ENCODE measurements at regions of chr16 and their contacts with region 1.

Region 1: DNA sequence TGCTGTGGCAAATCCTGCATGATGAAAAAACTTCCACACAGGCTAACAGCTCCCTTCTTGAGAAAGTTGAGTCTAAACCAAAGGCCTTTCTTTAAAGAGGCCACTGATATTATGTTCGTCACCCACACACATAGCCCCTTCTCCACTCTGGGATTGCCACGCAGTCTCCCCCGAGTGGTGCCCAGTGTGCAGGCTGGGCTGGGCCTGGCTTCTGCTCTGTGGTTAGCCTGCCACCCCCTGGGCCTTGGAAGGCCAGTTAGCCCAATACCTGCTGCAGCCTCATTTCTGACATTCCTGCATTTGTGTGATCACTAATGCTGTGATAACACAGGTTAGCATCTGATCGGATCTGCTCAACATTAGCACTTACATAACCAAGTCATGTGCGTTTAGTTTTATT is 44.8 kb downstream of the CDH3 start:
- DNase-seq: no peak
- ATAC-seq: peak; percentile 34; the same call in 1 of the 2 replicates
- H3K4me3 ChIP-seq: no peak overlapping the region
- H3K27ac ChIP-seq: no peak overlapping the region
- H3K4me1 ChIP-seq: no peaks in the 10 kb centered on the region
- H3K27me3 ChIP-seq: no peaks in the 10 kb centered on the region
- CTCF ChIP-seq: no peak

Region 2: DNA sequence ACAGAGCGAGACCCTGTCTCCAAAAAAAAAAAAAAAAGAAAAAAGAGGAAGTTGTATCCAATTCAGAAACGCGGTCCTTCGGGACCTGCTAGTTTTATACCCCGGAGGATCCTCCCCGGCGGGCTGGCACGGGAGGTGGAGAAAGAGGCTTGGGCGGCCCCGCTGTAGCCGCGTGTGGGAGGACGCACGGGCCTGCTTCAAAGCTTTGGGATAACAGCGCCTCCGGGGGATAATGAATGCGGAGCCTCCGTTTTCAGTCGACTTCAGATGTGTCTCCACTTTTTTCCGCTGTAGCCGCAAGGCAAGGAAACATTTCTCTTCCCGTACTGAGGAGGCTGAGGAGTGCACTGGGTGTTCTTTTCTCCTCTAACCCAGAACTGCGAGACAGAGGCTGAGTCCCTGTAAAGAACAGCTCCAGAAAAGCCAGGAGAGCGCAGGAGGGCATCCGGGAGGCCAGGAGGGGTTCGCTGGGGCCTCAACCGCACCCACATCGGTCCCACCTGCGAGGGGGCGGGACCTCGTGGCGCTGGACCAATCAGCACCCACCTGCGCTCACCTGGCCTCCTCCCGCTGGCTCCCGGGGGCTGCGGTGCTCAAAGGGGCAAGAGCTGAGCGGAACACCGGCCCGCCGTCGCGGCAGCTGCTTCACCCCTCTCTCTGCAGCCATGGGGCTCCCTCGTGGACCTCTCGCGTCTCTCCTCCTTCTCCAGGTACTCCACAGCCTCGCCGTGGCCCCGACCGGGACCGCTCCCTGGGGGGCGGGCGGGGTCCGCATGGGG is 45.0 kb before region 1 on chr16 and contains the start of gene CDH3:
- CTCF ChIA-PET with region 1: no interaction called
- POLR2A ChIA-PET with region 1: interaction called, 11 read pairs
- in situ Hi-C with region 1: no loop called
- intact Hi-C with region 1: no loop called
- DNase-seq: no peak
- ATAC-seq: peak; percentile 65
- H3K4me3 ChIP-seq: peak within 1 kb of the TSS; percentile 32 to 64
- H3K27ac ChIP-seq: no peak within 1 kb of the TSS
- H3K4me1 ChIP-seq: peaks cover 13% of the 10 kb centered on the region
- H3K27me3 ChIP-seq: no peaks in the 10 kb centered on the region; the same call in 1 of the 2 replicates
- CTCF ChIP-seq: no peak
- total RNA-seq, gene CDH3: 16.7 TPM

Region 3: DNA sequence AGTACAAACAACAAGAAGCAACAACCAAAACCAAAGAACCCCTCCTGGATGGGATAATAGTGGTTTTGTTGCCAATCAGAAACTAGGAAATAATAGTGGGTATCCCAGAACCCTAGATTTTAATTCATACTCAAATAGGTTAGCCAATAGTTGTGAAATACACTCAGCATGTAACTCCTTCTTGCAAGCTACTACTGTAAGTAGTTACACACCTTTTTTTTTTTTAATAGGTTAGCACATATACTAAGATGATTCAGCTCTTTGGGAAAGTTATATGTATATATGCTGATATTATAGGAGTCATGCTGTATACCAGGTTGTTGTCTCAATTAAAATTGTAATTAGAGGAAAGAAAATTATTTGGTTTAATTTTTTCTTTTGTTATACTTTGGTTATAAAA is 323.0 kb after region 1 on chr16:
- CTCF ChIA-PET with region 1: no interaction called
- POLR2A ChIA-PET with region 1: interaction called, 12 read pairs
- in situ Hi-C with region 1: no loop called
- intact Hi-C with region 1: no loop called
- DNase-seq: no peak
- ATAC-seq: no peak
- H3K4me3 ChIP-seq: no peak overlapping the region
- H3K27ac ChIP-seq: no peak overlapping the region
- H3K4me1 ChIP-seq: peaks cover 6% of the 10 kb centered on the region; the same call in 1 of the 2 replicates
- H3K27me3 ChIP-seq: no peaks in the 10 kb centered on the region
- CTCF ChIP-seq: no peak

Measured in Panc1 (cell line).